ENCODE measurements at regions of chr14 and their contacts with region 1.

Region 1: DNA sequence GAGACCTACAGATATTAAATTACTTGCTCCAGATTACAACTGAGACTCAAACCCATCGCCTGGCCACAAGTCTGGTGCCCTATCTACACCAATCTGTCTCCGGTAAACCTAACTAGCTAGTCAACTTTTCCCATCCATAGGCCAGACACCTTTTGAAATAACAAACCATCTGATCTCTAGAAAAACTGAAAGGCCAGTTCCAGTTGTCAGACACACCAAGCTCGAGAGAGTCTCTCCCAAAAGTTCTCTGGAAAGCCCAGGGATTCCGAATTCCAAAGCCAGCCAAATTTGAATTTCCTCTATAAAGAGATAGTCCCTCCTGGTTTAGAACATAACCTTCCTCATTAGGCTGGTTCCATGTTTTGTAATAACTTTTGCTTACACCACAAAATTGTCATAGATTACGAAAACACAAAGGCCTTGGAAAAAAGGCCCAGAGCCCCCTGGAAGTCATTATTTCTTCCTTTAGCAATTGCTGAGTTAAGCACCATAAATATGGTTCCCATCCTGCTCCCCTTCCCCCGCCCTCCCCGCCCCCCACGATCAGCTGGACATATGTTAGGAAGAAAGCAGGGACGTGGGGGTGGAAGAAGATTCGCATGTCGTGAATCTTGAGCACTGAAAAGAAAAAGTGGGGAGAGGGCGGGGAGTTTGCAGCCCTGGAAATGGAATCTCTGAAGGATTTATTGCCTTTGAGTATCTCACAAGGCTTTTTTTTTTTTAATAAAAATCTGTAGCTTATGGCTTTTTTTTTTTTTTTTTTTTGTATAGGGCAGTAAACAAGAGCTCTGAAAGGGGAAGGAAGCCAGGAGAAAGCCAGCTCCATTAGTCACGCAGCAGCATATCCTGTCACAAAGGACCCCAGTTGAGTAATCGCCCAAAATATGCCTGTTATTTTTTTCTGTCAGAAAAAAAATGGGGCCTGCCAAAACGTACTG is 110.4 kb downstream of the ZFP36L1 start:
- DNase-seq: peak; percentile 79

Region 2: DNA sequence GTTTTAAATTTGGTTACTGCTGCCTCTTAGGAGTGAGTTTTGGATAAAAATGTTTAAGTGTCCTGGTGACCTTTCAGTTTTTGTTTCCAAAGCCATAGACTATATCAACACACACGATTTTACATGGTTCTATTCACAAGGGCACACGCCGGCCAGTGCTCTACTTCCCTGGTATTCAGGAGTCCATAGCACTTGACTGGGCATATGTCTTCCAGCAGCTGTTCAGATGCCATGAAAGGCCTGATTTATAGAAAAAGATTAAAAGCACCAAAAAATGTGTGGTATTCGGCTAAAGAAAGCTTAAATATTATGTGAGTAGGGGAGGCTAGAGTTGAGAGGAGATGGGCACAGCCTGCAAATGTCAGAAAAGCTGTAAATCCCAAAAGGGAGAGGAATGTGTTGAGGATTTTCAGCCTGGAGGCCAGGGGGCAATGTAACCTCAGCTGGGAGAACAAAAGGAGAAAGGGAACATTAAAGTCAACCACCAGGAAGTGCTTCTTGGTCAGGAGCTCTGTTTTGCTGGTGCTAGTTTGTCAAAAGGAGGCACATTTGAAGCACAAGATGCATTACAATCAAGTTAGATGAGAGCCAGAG is 384.5 kb before region 1 on chr14:
- intact Hi-C with region 1: no loop called
- DNase-seq: no peak

Region 3: DNA sequence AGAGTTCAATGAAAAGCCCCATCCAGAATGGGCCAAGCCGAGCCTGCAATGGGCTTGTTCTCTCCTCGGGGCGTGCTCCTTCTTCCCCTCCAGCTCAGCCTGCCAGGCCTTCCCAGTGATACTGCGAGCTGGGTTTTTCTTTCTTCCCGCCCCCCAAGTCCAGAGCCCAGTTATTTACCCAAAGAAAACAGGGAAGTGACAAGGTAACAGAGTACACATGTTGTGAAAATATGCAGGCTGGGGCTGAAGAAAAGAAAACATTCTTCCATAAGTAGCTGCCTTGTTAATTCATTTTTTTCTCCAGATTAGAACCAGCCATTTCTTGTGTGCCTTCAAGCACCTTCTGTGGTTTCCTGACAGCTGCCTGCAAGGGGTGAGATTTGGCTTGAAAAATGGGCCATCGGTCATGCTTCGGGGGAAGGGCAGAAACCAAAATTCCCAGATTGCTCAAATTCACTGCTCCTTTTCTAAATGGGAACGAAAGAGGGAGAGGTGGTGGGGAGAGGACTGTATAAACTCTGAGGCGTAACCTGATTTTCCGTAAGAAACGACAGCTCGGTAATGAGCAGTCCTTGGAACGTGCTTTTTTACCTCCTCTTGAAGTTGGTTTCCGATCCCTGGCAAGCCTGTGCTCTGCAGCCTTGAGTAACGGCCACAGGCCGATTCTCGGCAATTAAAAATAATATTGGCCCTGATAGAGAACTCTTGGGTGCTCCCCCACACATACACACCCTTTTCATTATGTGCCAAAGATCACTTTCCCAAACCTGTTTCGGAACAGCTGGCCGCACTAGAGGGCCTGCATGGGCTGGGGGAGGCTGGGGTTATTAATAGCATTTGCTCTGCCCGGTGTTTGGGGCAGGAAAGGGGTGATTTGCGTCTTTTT is 118.9 kb before region 1 on chr14:
- intact Hi-C with region 1: loop called (anchors 5 kb)
- DNase-seq: no peak

Region 4: DNA sequence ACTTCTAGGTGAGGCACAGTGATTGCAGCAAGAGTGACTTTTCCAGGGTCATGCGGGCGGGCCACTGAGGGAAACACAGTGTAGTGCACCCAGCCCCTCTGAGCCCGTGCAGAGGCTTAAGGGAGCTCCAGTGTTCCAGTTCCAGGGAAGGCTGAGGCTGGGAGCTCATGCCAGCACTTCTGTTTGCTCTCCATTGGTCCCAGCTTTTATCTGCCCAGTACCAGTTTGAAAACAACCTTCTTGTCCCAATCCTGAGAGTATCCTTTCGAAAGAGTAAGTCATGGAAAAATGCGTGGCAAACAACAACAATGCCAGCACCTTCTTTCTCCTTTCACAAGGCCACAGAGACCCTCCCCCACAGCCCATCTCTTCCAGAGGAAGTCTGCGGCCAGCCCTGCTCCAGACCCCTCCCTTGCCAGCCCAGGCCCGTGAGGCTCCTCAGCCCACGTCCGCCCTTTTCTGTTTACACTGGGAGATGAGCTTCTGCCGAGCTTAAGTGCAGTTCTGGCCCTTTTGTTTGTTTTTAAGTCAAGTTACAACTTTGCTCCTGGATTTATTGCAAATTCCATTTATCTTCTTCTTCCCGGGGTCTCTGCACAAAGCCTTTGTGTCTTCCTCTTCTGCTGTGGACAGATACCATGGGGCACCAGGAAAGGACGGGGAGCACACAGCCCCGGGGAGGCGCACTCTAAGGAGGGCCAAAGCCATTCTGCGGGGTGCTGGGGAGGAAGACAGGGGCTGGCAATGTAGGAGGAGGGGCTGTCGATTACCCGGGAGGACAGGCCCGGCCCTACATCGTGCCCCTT is 75.2 kb before region 1 on chr14:
- intact Hi-C with region 1: loop called (anchors 5 kb)
- DNase-seq: no peak

Region 5: GRCh38 chr14:68633071-68633991 is 49.1 kb before region 1 on chr14:
- intact Hi-C with region 1: loop called (anchors 5 kb)
- DNase-seq: no peak

Region 6: DNA sequence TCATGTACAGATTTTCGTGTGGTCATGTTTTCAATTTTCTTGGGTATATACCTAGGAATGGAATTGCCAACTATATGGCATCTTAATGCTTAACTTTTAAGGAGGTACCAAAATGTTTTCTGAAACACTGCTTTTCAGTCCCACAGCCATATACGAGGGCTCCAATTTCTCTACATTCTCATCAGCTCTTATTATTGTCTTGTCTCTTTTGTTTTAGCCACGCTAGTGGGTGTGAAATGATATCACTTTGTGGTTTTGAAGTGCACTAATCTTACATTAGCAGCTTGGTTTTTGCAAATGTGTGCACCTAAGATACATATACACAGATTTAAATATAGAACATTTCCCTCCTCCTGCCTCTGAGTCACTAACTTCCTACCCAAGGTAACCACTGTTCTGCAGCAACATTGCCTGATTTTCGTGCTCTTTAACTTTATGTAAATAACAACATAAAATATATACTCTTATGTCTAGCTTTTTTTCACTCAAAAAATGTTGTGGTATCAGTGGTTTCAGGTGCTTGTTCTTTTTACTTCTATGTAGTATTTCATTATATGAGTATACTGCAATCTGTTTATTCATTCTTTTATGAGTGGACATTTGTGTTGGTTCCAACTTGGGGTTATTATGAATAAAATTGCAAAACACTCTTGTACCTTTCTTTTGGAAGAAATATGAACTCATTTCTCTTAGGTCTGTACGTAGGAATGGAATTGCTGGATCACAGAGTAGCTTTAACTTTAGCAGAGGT is 37.4 kb after region 1 on chr14:
- intact Hi-C with region 1: loop called (anchors 5 kb)
- DNase-seq: no peak

Region 7: DNA sequence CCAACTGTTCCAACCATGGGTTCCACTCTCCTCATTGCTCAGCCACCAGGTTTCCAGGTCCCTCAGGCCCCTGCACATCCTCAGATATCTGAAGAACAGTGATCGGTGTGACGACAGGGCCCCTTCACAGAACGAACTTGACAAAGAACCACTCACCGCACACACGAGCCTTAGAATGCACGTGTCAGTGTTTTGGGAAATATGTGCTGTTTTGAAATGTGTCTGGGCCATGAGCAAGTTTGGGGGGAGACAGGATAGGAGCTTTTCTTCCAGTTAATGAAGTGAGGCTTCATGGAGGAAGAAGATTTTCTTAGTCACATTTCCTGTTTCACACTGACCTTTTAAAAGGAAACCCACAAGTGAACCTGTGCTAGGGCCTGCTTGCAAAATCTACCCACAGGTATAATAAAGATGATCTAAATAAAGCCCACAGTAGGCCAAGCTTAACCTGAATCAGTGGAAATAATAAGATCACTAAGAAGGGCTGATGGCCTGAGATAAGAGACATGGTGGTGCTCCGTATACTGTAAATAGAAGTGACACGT is 51.9 kb after region 1 on chr14:
- intact Hi-C with region 1: no loop called
- DNase-seq: peak; percentile 83

Region 8: DNA sequence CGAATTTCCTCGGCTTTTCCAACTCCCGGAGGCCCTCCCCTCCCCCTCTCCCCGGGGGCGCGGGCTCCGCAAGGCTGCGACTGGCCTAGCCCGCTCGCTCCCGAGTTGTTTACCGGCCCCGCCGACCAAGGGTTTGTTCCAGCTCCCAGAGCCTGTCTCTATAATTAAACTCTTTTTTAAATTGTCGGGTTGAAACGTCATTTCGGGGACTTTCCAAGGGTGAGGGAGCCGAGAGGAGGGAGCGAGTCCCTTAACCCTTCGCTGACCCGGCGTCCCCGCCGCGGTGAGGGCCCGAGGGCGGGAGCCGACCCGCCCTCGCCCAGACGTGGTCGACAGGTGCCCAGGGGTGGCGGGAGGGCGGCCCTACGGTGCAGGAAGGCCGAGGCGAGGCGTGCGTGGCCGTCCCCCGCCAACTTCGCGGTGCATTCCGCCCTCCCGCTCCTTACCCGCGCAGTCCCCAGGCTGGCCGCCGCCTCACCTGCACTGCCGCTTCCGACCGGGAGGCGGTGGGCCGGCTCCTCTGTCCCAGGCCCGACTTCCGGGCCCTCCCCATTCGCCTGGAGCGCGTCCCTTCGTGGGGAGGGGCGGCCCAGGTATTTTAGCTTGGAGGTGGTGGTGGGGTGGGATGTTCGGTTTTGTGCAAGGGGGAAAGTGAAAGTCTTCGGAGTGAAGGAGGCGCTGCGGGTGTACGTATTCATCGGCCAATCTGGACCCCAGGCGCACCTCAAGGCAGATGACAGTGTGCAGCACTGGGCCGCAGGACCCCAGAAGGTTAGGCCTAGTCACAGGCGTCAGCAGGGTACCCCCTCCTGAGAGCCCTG is 113.4 kb after region 1 on chr14:
- intact Hi-C with region 1: loop called (anchors 2 kb)
- DNase-seq: peak; percentile 93

Region 9: DNA sequence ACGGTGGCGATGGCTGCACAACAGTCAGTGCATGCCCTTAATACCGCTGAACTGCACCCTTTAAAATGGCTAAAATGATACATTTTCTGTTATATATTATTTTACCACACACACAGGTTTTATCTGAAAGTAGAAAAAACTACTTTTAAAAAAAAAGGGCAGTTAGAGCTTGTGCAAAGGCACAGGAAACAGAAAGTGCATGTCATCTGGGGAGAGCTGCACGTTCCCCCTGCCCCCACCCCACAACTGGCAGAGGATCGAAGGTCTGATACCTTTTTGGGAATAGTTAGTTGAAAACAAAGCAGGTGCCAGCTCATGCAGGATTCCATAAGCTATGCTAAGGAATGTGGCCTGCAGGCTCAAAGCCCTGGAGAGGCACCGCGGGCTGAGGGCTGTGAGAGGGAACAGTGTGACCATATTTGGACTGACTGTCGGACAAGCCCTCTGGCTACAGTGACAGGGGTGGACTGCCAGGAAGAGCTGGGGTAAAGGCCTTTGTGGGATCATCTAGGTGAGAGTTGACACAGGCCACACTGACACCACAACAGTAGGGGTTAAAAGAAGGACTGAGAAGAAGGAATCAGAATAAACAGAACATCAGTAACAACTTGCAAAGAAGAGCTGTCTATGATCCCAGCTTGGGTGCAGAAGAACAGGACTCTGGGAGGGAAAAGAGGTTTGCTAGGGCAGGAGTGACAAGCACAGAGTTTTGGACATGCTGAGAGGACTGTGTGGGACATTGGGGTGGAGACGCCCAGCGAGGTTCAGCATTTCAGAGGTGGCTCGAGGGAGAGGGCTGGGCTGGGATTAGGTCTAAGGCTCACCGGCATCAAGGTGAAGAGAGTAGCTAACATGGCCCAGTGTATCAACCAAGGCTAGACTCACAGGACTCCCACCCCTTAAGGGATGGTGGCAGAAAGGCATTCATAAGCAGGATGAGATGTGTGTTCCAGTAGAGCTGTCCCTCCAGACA is 242.0 kb after region 1 on chr14:
- intact Hi-C with region 1: no loop called
- DNase-seq: no peak

Measured in cardiac septum (tissue), 1 donor.